Caco-2 (cell line): ENCODE measurements at regions of chr6 and their contacts with region 1.

Region 1: DNA sequence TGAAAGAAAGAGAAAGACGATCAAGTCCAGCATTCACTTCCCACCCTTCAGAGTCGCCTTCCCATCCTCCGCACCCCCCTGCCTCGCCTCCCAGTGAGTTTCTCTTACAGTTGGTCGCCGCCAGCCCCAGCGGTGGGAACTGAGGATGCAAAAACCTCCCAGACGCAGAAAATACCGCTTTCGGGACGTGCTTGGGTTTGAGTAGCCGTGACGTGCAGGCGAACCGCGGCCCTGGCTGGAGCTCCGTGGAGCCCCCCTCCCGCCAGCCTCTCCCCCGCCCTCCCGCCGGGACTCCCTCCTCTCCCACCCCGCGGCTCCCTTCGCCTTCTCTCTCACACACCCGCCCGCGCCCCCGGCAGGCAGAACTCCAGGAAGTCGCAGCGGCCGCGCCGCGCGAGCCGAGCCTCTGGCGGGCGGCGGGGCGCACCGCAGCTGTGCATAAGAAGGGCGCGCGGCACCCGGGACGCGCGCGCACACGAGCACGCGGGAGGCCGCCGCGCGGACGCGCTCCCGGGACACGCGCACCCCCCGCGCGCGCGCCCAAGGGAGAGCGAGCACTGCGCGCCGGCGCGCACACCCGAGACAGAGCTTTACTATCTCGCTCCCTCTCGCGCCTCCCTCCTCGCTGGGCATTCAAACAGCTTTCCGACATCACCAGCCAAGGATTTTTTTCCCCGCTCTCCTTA is at the start of gene ADGRB3:
- DNase-seq: peak; percentile 58 to 67
- H3K4me3 ChIP-seq: peak within 1 kb of the TSS; percentile 51
- H3K4me3 Mint-ChIP-seq: peak within 1 kb of the TSS; percentile 82
- H3K27ac Mint-ChIP-seq: no peak within 1 kb of the TSS
- H3K4me1 ChIP-seq: no peaks in the 10 kb centered on the region; the same call in 1 of the 2 replicates
- H3K4me1 Mint-ChIP-seq: peaks cover 9% of the 10 kb centered on the region
- H3K27me3 ChIP-seq: no peaks in the 10 kb centered on the region; the same call in 1 of the 2 replicates
- H3K27me3 Mint-ChIP-seq: peaks cover 31% of the 10 kb centered on the region
- CTCF ChIP-seq: peak in 1 of 2 experiments; percentile 21
- total RNA-seq, gene ADGRB3: 0.18 TPM in 1 of 2 replicates, not detected in the other

Region 2: GRCh38 chr6:68544450-68544849 is 90.4 kb before region 1 on chr6:
- CTCF ChIA-PET with region 1: no interaction called
- POLR2A ChIA-PET with region 1: no interaction called
- intact Hi-C with region 1: no loop called
- DNase-seq: no peak
- H3K4me3 ChIP-seq: no peak overlapping the region
- H3K4me3 Mint-ChIP-seq: no peak overlapping the region
- H3K27ac Mint-ChIP-seq: no peak overlapping the region
- H3K4me1 ChIP-seq: no peaks in the 10 kb centered on the region
- H3K4me1 Mint-ChIP-seq: no peaks in the 10 kb centered on the region
- H3K27me3 ChIP-seq: no peaks in the 10 kb centered on the region
- H3K27me3 Mint-ChIP-seq: no peaks in the 10 kb centered on the region
- CTCF ChIP-seq: no peak

Region 3: DNA sequence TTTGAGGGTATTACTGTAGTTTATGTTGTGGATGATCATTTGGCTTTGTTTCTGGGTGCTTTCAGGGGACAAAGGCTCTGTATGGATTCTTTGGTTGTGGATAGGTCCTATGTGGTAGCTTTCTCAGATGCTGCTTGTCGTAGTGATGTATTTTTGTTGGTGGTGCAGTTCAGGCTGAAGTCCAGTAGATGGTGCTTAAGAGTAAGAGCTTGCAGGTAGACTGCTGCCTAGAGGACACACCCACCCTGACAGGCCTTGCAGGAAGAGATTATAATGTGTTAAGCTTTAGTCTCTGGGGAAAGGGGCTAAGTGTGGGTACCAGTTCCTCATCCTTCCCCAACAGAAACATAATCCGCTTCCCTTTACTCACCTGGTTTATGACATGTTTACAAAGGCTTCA is 62.3 kb before region 1 on chr6:
- CTCF ChIA-PET with region 1: no interaction called
- POLR2A ChIA-PET with region 1: no interaction called
- intact Hi-C with region 1: loop called (anchors 5 kb)
- DNase-seq: peak; percentile 49 to 54
- H3K4me3 ChIP-seq: no peak overlapping the region
- H3K4me3 Mint-ChIP-seq: no peak overlapping the region
- H3K27ac Mint-ChIP-seq: no peak overlapping the region
- H3K4me1 ChIP-seq: no peaks in the 10 kb centered on the region
- H3K4me1 Mint-ChIP-seq: no peaks in the 10 kb centered on the region
- H3K27me3 ChIP-seq: no peaks in the 10 kb centered on the region
- H3K27me3 Mint-ChIP-seq: no peaks in the 10 kb centered on the region
- CTCF ChIP-seq: peak; percentile 41 to 58

Region 4: GRCh38 chr6:68689910-68690309 is 55.0 kb after region 1 on chr6:
- CTCF ChIA-PET with region 1: no interaction called
- POLR2A ChIA-PET with region 1: no interaction called
- intact Hi-C with region 1: no loop called
- DNase-seq: no peak
- H3K4me3 ChIP-seq: no peak overlapping the region
- H3K4me3 Mint-ChIP-seq: no peak overlapping the region
- H3K27ac Mint-ChIP-seq: no peak overlapping the region
- H3K4me1 ChIP-seq: no peaks in the 10 kb centered on the region
- H3K4me1 Mint-ChIP-seq: no peaks in the 10 kb centered on the region
- H3K27me3 ChIP-seq: no peaks in the 10 kb centered on the region
- H3K27me3 Mint-ChIP-seq: no peaks in the 10 kb centered on the region
- CTCF ChIP-seq: no peak

Region 5: GRCh38 chr6:68778356-68779020 is 143.6 kb after region 1 on chr6:
- CTCF ChIA-PET with region 1: no interaction called
- POLR2A ChIA-PET with region 1: no interaction called
- intact Hi-C with region 1: loop called (anchors 1 kb)
- DNase-seq: peak in 1 of 2 experiments; percentile 27
- H3K4me3 ChIP-seq: no peak overlapping the region
- H3K4me3 Mint-ChIP-seq: no peak overlapping the region
- H3K27ac Mint-ChIP-seq: no peak overlapping the region
- H3K4me1 ChIP-seq: no peaks in the 10 kb centered on the region
- H3K4me1 Mint-ChIP-seq: no peaks in the 10 kb centered on the region
- H3K27me3 ChIP-seq: no peaks in the 10 kb centered on the region
- H3K27me3 Mint-ChIP-seq: peaks cover 3% of the 10 kb centered on the region
- CTCF ChIP-seq: peak; percentile 53 to 59

Region 6: DNA sequence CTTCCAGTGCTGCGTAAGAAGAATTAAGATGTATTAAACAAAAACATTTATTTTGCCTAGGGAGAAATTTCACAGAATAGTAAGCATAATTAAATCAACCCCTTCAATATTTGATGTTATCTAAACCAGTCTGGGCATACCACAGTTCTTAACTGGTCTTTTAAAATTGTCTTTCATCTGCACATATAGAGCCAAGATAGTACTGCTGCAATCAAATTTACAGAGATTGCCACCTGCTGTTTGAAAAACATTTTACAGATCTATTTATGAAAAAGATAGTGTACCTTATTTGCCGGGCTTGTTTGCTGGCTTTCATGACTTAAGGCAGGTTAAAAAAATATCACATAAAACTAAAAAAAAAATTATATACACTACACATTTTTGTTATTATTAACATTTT is 323.5 kb after region 1 on chr6:
- CTCF ChIA-PET with region 1: no interaction called
- POLR2A ChIA-PET with region 1: no interaction called
- intact Hi-C with region 1: loop called (anchors 1 kb)
- DNase-seq: no peak
- H3K4me3 ChIP-seq: no peak overlapping the region
- H3K4me3 Mint-ChIP-seq: no peak overlapping the region
- H3K27ac Mint-ChIP-seq: no peak overlapping the region
- H3K4me1 ChIP-seq: no peaks in the 10 kb centered on the region
- H3K4me1 Mint-ChIP-seq: no peaks in the 10 kb centered on the region
- H3K27me3 ChIP-seq: no peaks in the 10 kb centered on the region
- H3K27me3 Mint-ChIP-seq: peaks cover 8% of the 10 kb centered on the region
- CTCF ChIP-seq: no peak

Region 7: GRCh38 chr6:68967549-68968300 is 332.9 kb after region 1 on chr6:
- CTCF ChIA-PET with region 1: no interaction called
- POLR2A ChIA-PET with region 1: no interaction called
- intact Hi-C with region 1: loop called (anchors 1 kb)
- DNase-seq: peak; percentile 41 to 69
- H3K4me3 ChIP-seq: no peak overlapping the region
- H3K4me3 Mint-ChIP-seq: no peak overlapping the region
- H3K27ac Mint-ChIP-seq: no peak overlapping the region
- H3K4me1 ChIP-seq: peaks cover 7% of the 10 kb centered on the region; the same call in 1 of the 2 replicates
- H3K4me1 Mint-ChIP-seq: peaks cover 10% of the 10 kb centered on the region
- H3K27me3 ChIP-seq: no peaks in the 10 kb centered on the region; the same call in 1 of the 2 replicates
- H3K27me3 Mint-ChIP-seq: peaks cover 8% of the 10 kb centered on the region
- CTCF ChIP-seq: peak; percentile 78 to 92